Right cardiac atrium (tissue), 5 donors: ENCODE measurements at regions of chr6 and their contacts with region 1.

Region 1: DNA sequence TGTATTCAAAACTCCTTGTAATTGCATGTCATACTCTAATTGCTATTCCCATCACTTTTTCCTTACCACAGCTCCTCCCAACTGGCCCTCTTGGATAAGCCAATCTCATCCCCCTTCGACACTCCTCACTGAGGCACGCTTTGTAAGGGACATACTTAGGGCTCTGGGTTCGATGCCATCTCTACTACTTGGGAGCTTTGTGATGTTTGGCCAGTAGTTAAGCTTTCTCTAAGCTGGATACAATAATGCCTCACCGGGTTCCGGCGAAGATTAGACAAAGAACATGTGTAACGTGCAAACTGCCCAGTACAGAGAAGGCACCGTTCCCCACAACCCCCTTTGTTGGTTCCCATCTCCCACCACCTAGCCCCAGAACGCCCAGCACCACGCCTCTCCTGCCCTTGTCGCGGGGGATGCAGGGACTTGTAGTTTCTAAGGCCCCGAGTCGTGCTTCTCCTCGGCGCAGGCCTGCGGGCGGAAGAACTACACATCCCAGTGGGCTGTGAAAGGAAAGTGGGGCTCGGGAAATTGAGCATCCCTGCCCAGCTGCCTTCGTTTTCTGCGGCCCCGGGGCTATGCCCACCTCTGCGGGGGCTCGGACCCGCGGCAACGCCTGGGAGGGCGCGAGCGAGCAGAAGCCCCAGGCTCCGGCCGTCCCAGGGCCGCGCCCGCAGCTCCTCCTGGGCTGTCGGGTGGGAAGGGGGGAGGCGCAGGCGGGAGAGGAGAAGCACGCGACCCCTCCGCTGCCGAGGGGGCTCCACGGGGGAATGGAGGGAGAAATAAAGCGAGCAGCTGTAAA is 1.1 kb upstream of the ZDHHC14 start:
- DNase-seq: peak; percentile 91 to 97 (median 95)
- ATAC-seq: peak; percentile 94 to 95
- H3K4me3 ChIP-seq: peak overlapping the region; percentile 90
- H3K27ac ChIP-seq: peak overlapping the region; percentile 91
- H3K4me1 ChIP-seq: no peaks in the 10 kb centered on the region
- H3K27me3 ChIP-seq: no peaks in the 10 kb centered on the region

Region 2: GRCh38 chr6:157323255-157323965 is 56.4 kb before region 1 on chr6 and contains the start of gene TMEM242:
- intact Hi-C with region 1: loop called in 3 of 4 experiments (anchors 5 to 10 kb)
- DNase-seq: peak; percentile 91 to 96 (median 96)
- ATAC-seq: peak; percentile 95 to 96
- H3K4me3 ChIP-seq: peak within 1 kb of the TSS; percentile 61
- H3K27ac ChIP-seq: peak within 1 kb of the TSS; percentile 96
- H3K4me1 ChIP-seq: peaks cover 4% of the 10 kb centered on the region
- H3K27me3 ChIP-seq: no peaks in the 10 kb centered on the region
- total RNA-seq, gene TMEM242: 11.5 to 14.8 (median 13.8) TPM

Region 3: GRCh38 chr6:157434349-157435033 is 54.6 kb after region 1 on chr6:
- intact Hi-C with region 1: loop called in 1 of 4 experiments (anchors 10 kb)
- DNase-seq: peak; percentile 70 to 85 (median 77)
- ATAC-seq: peak; percentile 72 to 73
- H3K4me3 ChIP-seq: no peak overlapping the region
- H3K27ac ChIP-seq: peak overlapping the region; percentile 96
- H3K4me1 ChIP-seq: peaks cover 25% of the 10 kb centered on the region
- H3K27me3 ChIP-seq: no peaks in the 10 kb centered on the region

Region 4: DNA sequence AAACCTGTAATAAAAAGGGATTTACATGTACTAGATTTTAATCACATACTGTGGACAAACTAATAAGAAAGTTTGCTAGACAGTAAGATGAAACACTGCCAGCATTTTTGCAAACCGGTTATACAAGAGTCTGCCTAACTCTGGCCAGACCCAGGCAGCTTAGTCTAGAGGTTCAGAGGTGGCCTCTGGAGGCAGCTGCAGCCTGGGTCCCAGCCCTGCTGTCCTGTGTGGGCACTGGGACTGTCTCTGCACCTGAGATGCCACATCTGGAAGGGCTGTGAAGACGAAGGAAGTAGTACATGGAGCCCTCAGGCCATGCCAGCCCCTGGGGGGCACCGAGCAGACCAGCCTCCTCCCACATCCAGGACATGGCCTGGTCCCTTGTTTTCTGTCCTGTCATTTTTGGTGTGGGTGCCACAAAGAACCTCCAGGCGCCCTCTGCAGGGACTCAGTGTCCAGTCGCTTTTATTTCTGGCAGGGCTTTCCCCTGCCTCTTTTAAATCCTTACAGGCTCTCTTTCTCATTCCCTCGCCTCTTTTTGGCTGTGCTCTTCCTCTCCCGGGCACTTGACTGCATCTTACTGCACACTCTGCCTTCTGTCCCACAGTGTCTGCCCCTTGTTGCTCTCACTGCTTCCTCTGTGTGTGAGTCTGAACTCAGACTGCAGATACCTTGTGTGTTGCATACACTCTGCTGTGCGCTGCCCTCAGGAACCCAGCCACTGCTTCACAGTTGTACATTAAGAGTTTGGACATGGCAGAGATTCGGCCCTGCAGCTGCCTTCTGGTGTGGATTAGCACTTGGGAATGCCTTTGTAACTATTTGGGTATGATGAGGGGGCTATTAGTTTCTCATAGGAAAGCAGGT is 217.8 kb after region 1 on chr6:
- intact Hi-C with region 1: loop called in 1 of 4 experiments (anchors 5 kb)
- DNase-seq: peak; percentile 53 to 82 (median 75)
- ATAC-seq: peak; percentile 71 to 77
- H3K4me3 ChIP-seq: no peak overlapping the region
- H3K27ac ChIP-seq: no peak overlapping the region
- H3K4me1 ChIP-seq: peaks cover 1% of the 10 kb centered on the region
- H3K27me3 ChIP-seq: no peaks in the 10 kb centered on the region